CD14-positive monocyte (primary cell): ENCODE measurements at regions of chr10 and their contacts with region 1.

Region 1: DNA sequence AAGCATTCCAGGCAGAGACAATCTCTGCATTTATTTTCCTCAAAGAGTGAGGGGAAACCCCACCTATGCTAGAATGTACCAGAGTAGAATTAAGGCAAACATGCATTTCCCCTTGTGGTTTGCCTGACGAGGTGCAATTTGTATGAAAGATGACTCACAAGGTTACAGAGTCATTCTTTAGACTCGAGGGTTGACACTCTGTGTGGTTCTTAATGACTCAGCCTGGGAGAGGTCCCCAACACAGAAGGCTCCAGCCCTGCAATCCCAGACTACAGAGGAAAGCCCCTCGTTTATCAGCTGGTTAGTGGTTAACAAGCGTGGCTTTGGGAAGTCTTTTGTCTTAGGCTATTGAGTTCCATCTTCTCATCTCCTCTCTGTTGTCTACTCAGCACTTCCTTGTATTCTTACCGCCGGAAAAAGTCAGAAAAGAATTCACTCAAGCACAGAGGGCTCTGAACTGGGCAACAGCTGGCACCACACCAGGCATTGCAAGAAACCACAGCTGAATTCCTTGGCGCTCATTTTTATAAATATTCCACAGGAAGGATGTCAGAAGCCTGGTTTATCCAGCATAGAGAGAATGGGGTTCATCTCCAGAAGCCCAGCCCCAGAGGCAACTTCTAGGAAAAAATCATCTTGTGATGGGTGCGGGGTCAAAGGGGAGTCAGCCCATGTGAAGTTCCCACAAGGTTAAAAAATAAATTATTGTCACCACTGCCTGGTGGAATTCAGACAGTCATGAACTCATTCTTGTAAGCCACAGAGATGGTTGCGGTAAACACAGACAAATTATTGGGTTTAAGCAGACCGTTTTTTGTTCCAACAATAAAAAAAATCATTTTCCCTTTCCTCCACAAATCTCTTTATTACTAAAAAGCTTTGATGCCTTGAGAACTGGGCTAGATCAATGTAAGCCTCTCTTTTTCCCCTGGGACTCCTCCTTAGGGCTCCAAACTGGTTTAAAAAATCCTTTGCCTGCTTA is 24.5 kb upstream of the SVIL start:
- DNase-seq: peak; percentile 97 to 100 (median 100)
- H3K4me3 ChIP-seq: peak overlapping the region in 2 of 3 experiments; percentile 14 to 38
- H3K4me3 Mint-ChIP-seq: peak overlapping the region; percentile 17 to 77
- H3K27ac ChIP-seq: peak overlapping the region; percentile 81 to 92
- H3K27ac Mint-ChIP-seq: peak overlapping the region; percentile 94 to 99 (median 97)
- H3K4me1 ChIP-seq: peaks cover 32 to 36% of the 10 kb centered on the region in 2 donors
- H3K4me1 Mint-ChIP-seq: peaks cover 40% of the 10 kb centered on the region
- H3K27me3 ChIP-seq: no peaks in the 10 kb centered on the region
- H3K27me3 Mint-ChIP-seq: no peaks in the 10 kb centered on the region
- CTCF ChIP-seq: peak; percentile 58

Region 2: GRCh38 chr10:29681676-29682448 is 22.6 kb after region 1 on chr10:
- intact Hi-C with region 1: loop called in 1 of 2 experiments (anchors 2 kb)
- DNase-seq: peak; percentile 96 to 98 (median 96)
- H3K4me3 ChIP-seq: peak overlapping the region in 1 of 3 experiments; percentile 55
- H3K4me3 Mint-ChIP-seq: peak overlapping the region; percentile 54 to 84
- H3K27ac ChIP-seq: peak overlapping the region; percentile 88 to 98
- H3K27ac Mint-ChIP-seq: peak overlapping the region; percentile 97 to 100 (median 98)
- H3K4me1 ChIP-seq: peaks cover 57 to 64% of the 10 kb centered on the region in 2 donors
- H3K4me1 Mint-ChIP-seq: peaks cover 67% of the 10 kb centered on the region
- H3K27me3 ChIP-seq: no peaks in the 10 kb centered on the region
- H3K27me3 Mint-ChIP-seq: peaks cover 0 to 3% (median 2%) of the 10 kb centered on the region in 3 donors
- CTCF ChIP-seq: no peak

Region 3: GRCh38 chr10:29689001-29689400 is 29.7 kb after region 1 on chr10:
- intact Hi-C with region 1: loop called in 1 of 2 experiments (anchors 5 kb)
- DNase-seq: peak; percentile 64 to 84 (median 82)
- H3K4me3 ChIP-seq: peak overlapping the region in 1 of 3 experiments; percentile 62
- H3K4me3 Mint-ChIP-seq: peak overlapping the region; percentile 34 to 39
- H3K27ac ChIP-seq: peak overlapping the region; percentile 70 to 96
- H3K27ac Mint-ChIP-seq: peak overlapping the region; percentile 92 to 99 (median 95)
- H3K4me1 ChIP-seq: peaks cover 36 to 49% of the 10 kb centered on the region in 2 donors
- H3K4me1 Mint-ChIP-seq: peaks cover 50% of the 10 kb centered on the region
- H3K27me3 ChIP-seq: no peaks in the 10 kb centered on the region
- H3K27me3 Mint-ChIP-seq: no peaks in the 10 kb centered on the region
- CTCF ChIP-seq: no peak

Region 4: GRCh38 chr10:29802171-29802570 is 142.9 kb after region 1 on chr10:
- intact Hi-C with region 1: loop called in 1 of 2 experiments (anchors 2 kb)
- DNase-seq: peak in 2 of 3 donors; percentile 45 to 50
- H3K4me3 ChIP-seq: no peak overlapping the region
- H3K4me3 Mint-ChIP-seq: no peak overlapping the region
- H3K27ac ChIP-seq: no peak overlapping the region
- H3K27ac Mint-ChIP-seq: peak overlapping the region in 4 of 7 donors; percentile 43 to 84 (median 68)
- H3K4me1 ChIP-seq: peaks cover 25 to 29% of the 10 kb centered on the region in 2 donors
- H3K4me1 Mint-ChIP-seq: peaks cover 27% of the 10 kb centered on the region
- H3K27me3 ChIP-seq: no peaks in the 10 kb centered on the region
- H3K27me3 Mint-ChIP-seq: peaks cover 1 to 4% (median 3%) of the 10 kb centered on the region in 3 donors
- CTCF ChIP-seq: no peak